Gastrocnemius medialis (tissue), 4 donors: ENCODE measurements at regions of chr7 and their contacts with region 1.

Region 1: GRCh38 chr7:110090110-110090769 is 1000.7 kb upstream of the LRRN3 start:
- DNase-seq: no peak
- ATAC-seq: no peak
- H3K4me3 ChIP-seq: no peak overlapping the region
- H3K27ac ChIP-seq: no peak overlapping the region
- H3K4me1 ChIP-seq: no peaks in the 10 kb centered on the region
- H3K27me3 ChIP-seq: no peaks in the 10 kb centered on the region
- CTCF ChIP-seq: no peak
- POLR2A ChIP-seq: no peak

Region 2: GRCh38 chr7:110153222-110153621 is 63.0 kb after region 1 on chr7:
- in situ Hi-C with region 1: no loop called
- intact Hi-C with region 1: loop called (anchors 5 kb)
- DNase-seq: no peak
- ATAC-seq: no peak
- H3K4me3 ChIP-seq: no peak overlapping the region
- H3K27ac ChIP-seq: no peak overlapping the region
- H3K4me1 ChIP-seq: no peaks in the 10 kb centered on the region
- H3K27me3 ChIP-seq: no peaks in the 10 kb centered on the region
- CTCF ChIP-seq: no peak
- POLR2A ChIP-seq: no peak